ENCODE measurements at regions of chr22 and their contacts with region 1.

Region 1: GRCh38 chr22:20550821-20551744 is 43.7 kb downstream of the MED15 start:
- DNase-seq: peak; percentile 61
- ATAC-seq: peak; percentile 18

Region 2: GRCh38 chr22:20507253-20508066 is 43.6 kb before region 1 on chr22 and contains the start of gene MED15:
- intact Hi-C with region 1: loop called (anchors 10 kb)
- DNase-seq: peak; percentile 93
- ATAC-seq: peak; percentile 93
- total RNA-seq, gene MED15: 51.0 TPM

Measured in left ventricle myocardium superior (tissue), 1 donor.